Activated CD4-positive, alpha-beta memory T cell treated with anti-CD3 and anti-CD28 coated beads for 36 hours (primary cell): ENCODE measurements at regions of chr2 and their contacts with region 1.

Region 1: DNA sequence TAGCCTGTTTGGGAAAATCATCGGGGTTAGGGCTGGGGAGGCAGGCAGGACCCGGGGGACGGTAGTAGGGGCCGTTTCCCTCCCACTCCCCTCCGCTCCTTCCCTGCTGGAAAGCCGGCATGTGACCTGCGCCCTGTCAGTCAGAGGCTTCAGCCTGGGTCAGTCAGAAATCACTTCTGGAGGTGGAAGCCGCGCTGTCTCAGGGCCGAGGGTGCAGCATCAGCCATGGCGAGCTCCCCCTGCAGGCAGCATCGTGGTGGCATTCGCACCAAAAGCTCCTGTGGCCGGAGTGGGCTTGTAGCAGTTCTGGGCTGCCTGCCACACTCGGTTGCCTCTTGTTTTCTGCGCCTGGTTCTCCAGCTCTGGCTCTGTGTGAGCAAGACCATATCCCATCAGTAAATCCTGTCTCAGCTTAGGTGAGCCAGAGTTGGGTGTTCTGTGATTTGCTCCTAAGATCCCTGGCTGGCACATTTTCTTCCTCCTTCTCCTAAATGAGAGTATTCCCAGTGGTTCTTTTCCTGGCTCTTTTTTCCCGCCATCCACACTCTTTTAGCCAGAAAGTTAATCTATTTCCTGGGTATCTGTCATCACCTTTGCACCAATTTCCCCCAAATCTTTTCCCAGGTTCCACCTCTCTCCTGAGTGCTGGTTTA is 123.9 kb upstream of the CD302 start:
- DNase-seq: peak; percentile 90
- H3K4me3 Mint-ChIP-seq: no peak overlapping the region
- H3K27ac Mint-ChIP-seq: no peak overlapping the region
- H3K4me1 Mint-ChIP-seq: peaks cover 35% of the 10 kb centered on the region
- H3K27me3 Mint-ChIP-seq: peaks cover 23% of the 10 kb centered on the region

Region 2: DNA sequence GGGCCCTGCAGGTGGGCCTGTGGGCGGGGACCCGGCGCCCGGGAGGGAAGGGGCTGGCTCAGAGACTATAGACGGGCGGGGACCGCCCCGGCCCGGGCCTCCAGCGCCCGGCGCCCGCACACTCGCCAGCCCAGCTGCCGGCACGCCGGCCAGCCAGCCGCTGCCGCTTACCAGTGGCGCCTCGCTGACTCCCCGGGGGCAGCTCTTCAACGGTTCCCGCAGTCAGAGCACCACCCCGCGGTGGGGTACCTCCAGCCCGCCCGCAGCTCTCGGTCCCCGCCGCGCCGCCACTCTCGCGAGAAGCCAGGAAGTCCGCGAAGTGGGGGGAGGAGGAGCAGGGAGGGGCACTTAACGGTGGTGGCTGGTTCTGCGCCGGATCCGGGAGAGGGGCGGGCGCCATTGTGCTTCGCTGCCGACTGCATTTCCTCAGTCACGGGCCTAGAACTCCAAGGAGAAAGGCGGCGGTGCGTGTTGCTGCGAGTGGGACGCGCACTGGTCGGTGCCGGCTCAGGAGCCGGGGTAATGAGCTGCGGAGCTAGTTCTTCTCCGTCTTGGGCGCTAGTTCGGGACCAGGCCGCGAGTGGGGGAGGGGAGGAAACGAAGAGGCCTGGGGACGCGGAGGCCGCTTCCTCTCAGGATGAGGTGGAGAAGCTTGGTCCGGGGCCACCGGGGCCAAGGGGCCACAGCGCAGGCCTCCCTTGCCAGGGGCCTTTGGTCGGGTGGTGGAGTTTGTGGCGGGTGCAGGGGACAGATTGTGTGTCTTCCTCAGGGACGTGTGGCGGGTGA is 209.5 kb before region 1 on chr2 and contains the start of gene MARCHF7:
- CTCF ChIA-PET with region 1: interaction called, 3 read pairs
- POLR2A ChIA-PET with region 1: interaction called, 3 read pairs
- intact Hi-C with region 1: loop called (anchors 1 kb)
- DNase-seq: peak; percentile 98
- H3K4me3 Mint-ChIP-seq: peak within 1 kb of the TSS; percentile 100
- H3K27ac Mint-ChIP-seq: peak within 1 kb of the TSS; percentile 100
- H3K4me1 Mint-ChIP-seq: peaks cover 47% of the 10 kb centered on the region
- H3K27me3 Mint-ChIP-seq: no peaks in the 10 kb centered on the region
- total RNA-seq, gene MARCHF7: 84.0 to 86.7 TPM

Region 3: GRCh38 chr2:159855557-159856061 is 66.3 kb before region 1 on chr2:
- CTCF ChIA-PET with region 1: interaction called, 5 read pairs
- POLR2A ChIA-PET with region 1: no interaction called
- intact Hi-C with region 1: loop called (anchors 5 kb)
- DNase-seq: no peak
- H3K4me3 Mint-ChIP-seq: no peak overlapping the region
- H3K27ac Mint-ChIP-seq: no peak overlapping the region
- H3K4me1 Mint-ChIP-seq: peaks cover 8% of the 10 kb centered on the region
- H3K27me3 Mint-ChIP-seq: no peaks in the 10 kb centered on the region

Region 4: GRCh38 chr2:159879051-159879604 is 42.8 kb before region 1 on chr2:
- CTCF ChIA-PET with region 1: interaction called, 9 read pairs
- POLR2A ChIA-PET with region 1: interaction called, 5 read pairs
- intact Hi-C with region 1: loop called (anchors 1 kb)
- DNase-seq: peak; percentile 72
- H3K4me3 Mint-ChIP-seq: no peak overlapping the region
- H3K27ac Mint-ChIP-seq: peak overlapping the region; percentile 88
- H3K4me1 Mint-ChIP-seq: peaks cover 61% of the 10 kb centered on the region
- H3K27me3 Mint-ChIP-seq: no peaks in the 10 kb centered on the region

Region 5: GRCh38 chr2:159960383-159960782 is 38.5 kb after region 1 on chr2:
- CTCF ChIA-PET with region 1: interaction called, 3 read pairs
- POLR2A ChIA-PET with region 1: no interaction called
- intact Hi-C with region 1: loop called (anchors 1 kb)
- DNase-seq: no peak
- H3K4me3 Mint-ChIP-seq: no peak overlapping the region
- H3K27ac Mint-ChIP-seq: no peak overlapping the region
- H3K4me1 Mint-ChIP-seq: peaks cover 16% of the 10 kb centered on the region
- H3K27me3 Mint-ChIP-seq: peaks cover 5% of the 10 kb centered on the region